ENCODE measurements at regions of chr11 and their contacts with region 1.

Region 1: DNA sequence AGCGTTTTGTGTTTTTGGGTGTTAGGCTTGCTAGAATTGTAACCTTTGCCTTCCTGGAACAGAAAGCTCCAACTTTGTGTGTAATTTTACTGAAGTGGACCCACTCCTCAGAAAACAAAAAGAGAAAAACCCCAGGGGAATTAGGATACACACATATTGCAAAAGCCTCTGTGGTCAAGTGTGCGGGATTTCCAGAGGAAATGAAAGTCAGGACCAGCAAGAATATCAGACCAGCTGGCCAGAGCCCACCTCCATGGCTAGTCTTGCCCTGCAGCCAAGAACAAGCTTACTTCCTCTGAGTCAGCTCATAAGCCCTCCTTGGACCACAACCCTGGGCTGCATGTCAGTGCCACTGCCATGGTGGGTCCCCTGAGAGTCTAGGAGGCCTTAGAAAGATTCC is 37.0 kb upstream of the FTH1 start:
- DNase-seq: peak in 4 of 10 donors; percentile 11 to 40 (median 28)
- H3K4me3 ChIP-seq: no peak overlapping the region
- H3K27ac ChIP-seq: peak overlapping the region in 57 of 59 donors; percentile 74 to 96 (median 89)
- H3K27me3 ChIP-seq: no peaks in the 10 kb centered on the region
- CTCF ChIP-seq: no peak

Region 2: DNA sequence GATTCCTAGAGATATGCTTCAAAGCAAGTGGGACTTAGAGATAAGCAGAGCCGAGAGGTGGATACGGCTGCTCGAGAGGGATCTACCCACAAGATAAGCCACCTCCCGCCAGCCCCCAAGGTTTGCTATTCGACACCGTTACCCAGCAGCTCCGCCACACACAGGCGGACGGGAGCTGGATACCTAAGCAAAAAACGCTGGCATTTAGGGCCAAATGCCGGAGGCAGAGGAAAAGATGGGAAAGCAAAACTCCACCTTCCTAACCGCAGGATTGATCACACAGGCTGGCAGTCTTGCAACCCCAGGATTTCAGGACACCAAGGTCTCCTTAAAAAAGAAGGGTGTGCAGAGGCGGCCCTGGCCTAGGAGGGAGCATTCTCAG is 37.7 kb before region 1 on chr11:
- intact Hi-C with region 1: no loop called
- DNase-seq: peak in 4 of 10 donors; percentile 28 to 49 (median 36)
- H3K4me3 ChIP-seq: peak overlapping the region; percentile 56 to 100 (median 96)
- H3K27ac ChIP-seq: peak overlapping the region; percentile 92 to 100 (median 99)
- H3K27me3 ChIP-seq: no peaks in the 10 kb centered on the region
- CTCF ChIP-seq: no peak

Region 3: GRCh38 chr11:62054484-62055121 is 50.1 kb after region 1 on chr11:
- intact Hi-C with region 1: loop called in 1 of 2 experiments (anchors 10 kb)
- DNase-seq: no peak
- H3K4me3 ChIP-seq: no peak overlapping the region
- H3K27ac ChIP-seq: no peak overlapping the region
- H3K27me3 ChIP-seq: no peaks in the 10 kb centered on the region
- CTCF ChIP-seq: peak in 5 of 56 donors; percentile 12 to 25 (median 15)